BJ (cell line): ENCODE measurements at regions of chr6 and their contacts with region 1.

Region 1: DNA sequence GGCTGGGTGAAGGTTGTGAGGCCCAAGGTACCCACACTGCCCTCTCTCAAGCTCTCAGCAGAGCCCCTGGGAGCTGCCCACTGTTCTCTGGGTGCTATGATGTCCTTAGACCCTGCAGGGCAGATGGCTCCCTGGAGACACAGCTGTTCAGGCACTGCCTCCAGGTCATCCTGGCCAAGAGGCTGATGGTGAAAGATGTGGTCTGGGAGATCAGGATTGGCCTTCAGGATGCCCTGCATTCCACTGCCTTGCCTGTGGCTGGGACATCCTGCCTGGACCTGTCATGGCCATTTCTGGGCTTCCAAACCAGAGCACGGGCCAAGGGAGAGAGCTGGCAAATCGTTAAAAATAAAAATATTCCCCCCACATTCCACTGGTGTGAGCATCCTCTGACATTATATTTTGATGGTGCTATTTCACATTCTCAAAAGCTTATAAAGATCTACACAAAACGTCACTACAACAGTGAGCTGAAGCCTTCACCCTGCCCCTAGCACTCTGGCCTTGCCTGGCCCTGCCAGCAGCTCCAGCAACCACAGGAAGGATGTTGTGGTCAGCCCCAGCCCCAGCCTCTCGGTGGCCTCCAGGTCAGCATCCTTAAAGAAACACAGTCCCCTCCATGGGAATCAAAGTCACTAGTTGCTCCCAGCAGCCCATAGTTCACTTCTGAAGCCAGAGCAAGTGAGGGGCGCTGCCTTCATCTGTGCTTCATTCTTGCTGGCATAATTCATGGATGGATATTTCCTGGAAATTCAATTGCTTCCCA is 13.5 kb upstream of the KCNK16 start:
- DNase-seq: no peak
- H3K4me3 ChIP-seq: no peak overlapping the region
- H3K27me3 ChIP-seq: 0 out of 2 replicates have a peak, but pooled peaks cover 1% of the 10 kb centered on the region
- CTCF ChIP-seq: no peak

Region 2: GRCh38 chr6:39347906-39348585 is 12.1 kb after region 1 on chr6:
- CTCF ChIA-PET with region 1: interaction called, 22 read pairs
- POLR2A ChIA-PET with region 1: no interaction called
- DNase-seq: no peak
- H3K4me3 ChIP-seq: no peak overlapping the region
- H3K27me3 ChIP-seq: no peaks in the 10 kb centered on the region
- CTCF ChIP-seq: peak; percentile 92